ENCODE measurements at regions of chr11 and their contacts with region 1.

Region 1: DNA sequence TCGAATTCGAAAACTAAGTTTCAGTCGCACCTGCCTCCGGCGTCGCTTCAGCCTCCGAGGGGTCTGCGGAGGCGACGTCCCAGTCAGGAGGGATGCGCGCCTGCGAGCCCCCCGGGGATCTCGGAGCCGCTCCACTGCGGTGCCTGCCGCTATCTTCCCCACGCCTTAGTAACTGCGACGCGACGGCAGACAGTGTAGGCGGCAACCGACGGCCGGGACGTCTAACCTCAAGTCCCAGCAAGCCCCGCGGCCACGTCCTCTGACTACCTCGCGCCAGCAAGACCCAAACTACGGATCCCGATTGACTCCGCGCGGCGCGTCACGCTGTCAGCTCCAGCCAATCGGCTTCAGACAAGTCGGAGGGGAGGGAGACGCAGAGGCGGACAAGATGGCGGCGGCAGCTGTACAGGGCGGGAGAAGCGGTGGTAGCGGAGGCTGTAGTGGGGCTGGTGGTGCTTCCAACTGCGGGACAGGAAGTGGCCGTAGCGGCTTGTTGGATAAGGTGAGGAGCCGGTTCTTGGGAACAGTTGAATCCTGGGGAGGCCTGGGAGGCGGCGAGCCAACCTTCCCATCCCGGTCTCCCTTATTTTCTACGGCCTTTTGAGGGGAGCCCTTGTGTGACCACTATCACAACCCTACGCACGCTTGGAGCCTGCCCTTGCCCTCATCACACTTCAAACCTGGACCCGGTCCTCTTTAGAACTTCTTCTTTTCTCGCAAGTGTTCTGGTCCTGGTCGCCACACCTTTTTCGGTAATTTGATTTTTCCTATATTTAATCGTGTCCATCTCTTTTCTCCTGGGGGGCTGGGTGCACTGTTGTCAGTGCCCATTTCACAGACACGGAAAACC is at the starts of genes SPCS2 and XRRA1:
- DNase-seq: peak; percentile 98
- H3K4me3 Mint-ChIP-seq: peak within 1 kb of the TSS; percentile 96
- H3K27ac Mint-ChIP-seq: peak within 1 kb of the TSS; percentile 96
- H3K4me1 Mint-ChIP-seq: peaks cover 46% of the 10 kb centered on the region
- H3K27me3 Mint-ChIP-seq: no peaks in the 10 kb centered on the region
- total RNA-seq, gene SPCS2: 167 and 172 TPM in 2 replicates
- total RNA-seq, gene XRRA1: 8.6 and 9.0 TPM in 2 replicates

Region 2: GRCh38 chr11:74492974-74493790 is 455.9 kb before region 1 on chr11 and contains the start of gene LIPT2:
- intact Hi-C with region 1: loop called (anchors 1 kb)
- DNase-seq: peak; percentile 96
- H3K4me3 Mint-ChIP-seq: peak within 1 kb of the TSS; percentile 86
- H3K27ac Mint-ChIP-seq: peak within 1 kb of the TSS; percentile 83
- H3K4me1 Mint-ChIP-seq: peaks cover 21% of the 10 kb centered on the region
- H3K27me3 Mint-ChIP-seq: peaks cover 8% of the 10 kb centered on the region
- total RNA-seq, gene LIPT2: 2.7 and 3.4 TPM in 2 replicates

Region 3: GRCh38 chr11:74929431-74930363 is 19.4 kb before region 1 on chr11:
- intact Hi-C with region 1: loop called (anchors 1 kb)
- DNase-seq: peak; percentile 49
- H3K4me3 Mint-ChIP-seq: no peak overlapping the region
- H3K27ac Mint-ChIP-seq: no peak overlapping the region
- H3K4me1 Mint-ChIP-seq: peaks cover 42% of the 10 kb centered on the region
- H3K27me3 Mint-ChIP-seq: no peaks in the 10 kb centered on the region

Region 4: GRCh38 chr11:74988541-74989260 is 39.6 kb after region 1 on chr11 and contains the start of gene NEU3:
- intact Hi-C with region 1: loop called (anchors 1 kb)
- DNase-seq: peak; percentile 79
- H3K4me3 Mint-ChIP-seq: peak within 1 kb of the TSS; percentile 94
- H3K27ac Mint-ChIP-seq: peak within 1 kb of the TSS; percentile 81
- H3K4me1 Mint-ChIP-seq: peaks cover 30% of the 10 kb centered on the region
- H3K27me3 Mint-ChIP-seq: no peaks in the 10 kb centered on the region
- total RNA-seq, gene NEU3: 16.3 and 16.9 TPM in 2 replicates

Region 5: DNA sequence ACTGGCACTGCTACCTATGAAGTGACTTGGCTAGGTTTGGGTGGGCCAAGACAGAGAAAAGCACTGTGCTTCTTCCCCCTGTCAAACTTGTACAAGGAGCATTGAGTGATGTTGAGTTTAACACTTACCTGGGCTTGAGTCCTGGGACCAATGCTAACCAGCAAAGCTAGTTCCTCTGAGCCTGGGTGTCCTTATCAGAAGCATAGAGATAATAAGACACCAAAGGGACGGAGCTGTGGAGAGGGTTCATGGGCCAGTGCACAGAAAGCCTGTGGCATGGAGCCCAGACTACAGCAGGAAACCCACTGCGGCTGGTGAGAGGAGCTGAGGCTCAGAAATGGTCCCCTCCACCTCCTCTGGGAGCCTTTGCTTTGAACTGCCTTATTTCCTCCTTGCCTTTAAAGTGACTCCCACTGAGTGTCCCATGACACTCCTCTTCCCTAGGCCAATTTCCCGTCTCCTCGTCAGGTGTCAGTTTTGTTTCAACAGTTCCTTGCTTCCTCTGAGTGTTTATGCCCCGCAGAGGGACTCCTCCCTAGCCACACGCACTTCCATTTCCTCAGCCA is 211.2 kb after region 1 on chr11:
- intact Hi-C with region 1: no loop called
- DNase-seq: no peak
- H3K4me3 Mint-ChIP-seq: no peak overlapping the region
- H3K27ac Mint-ChIP-seq: no peak overlapping the region
- H3K4me1 Mint-ChIP-seq: peaks cover 10% of the 10 kb centered on the region
- H3K27me3 Mint-ChIP-seq: peaks cover 4% of the 10 kb centered on the region

Region 6: GRCh38 chr11:75399344-75400145 is 450.4 kb after region 1 on chr11 and contains the start of gene RPS3:
- intact Hi-C with region 1: loop called (anchors 1 kb)
- DNase-seq: peak; percentile 86
- H3K4me3 Mint-ChIP-seq: peak within 1 kb of the TSS; percentile 99
- H3K27ac Mint-ChIP-seq: peak within 1 kb of the TSS; percentile 90
- H3K4me1 Mint-ChIP-seq: peaks cover 51% of the 10 kb centered on the region
- H3K27me3 Mint-ChIP-seq: peaks cover 3% of the 10 kb centered on the region
- total RNA-seq, gene RPS3: 2,822 and 2,924 TPM in 2 replicates

Measured in activated T-helper 1 cell treated with anti-CD3 and anti-CD28 coated beads, Interleukin-12 subunit alpha, Interleukin-12 subunit beta, Interleukin-2, Interleukin-4 antibody, amounts not matched to agents 30 ng/mL and 10 ng/mL and 1 ng/mL, durations not matched to agents 14 hours and 24 hours and 36 hours (primary cell).